PC-3 (cell line): ENCODE measurements at regions of chrX and their contacts with region 1.

Region 1: DNA sequence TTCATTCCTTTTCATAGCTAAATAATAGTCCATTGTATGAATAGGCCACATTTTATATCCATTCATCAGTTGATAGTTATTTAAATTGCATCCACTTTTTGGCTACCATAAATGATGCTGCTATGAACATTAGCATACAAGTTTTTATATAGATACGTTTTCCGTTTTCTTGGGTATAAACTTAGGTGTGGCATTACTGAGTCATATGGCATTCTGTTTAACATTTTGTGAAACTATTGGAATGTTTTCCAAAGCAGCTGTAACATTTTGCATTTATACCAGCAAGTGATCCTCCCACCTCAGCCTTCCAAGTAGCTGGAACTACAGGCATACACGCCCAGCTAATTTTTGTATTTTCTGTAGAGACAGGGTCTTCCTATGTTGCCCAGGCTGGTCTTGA is 26.3 kb downstream of the CLDN2 start:
- DNase-seq: peak; percentile 61
- ATAC-seq: peak; percentile 71
- H3K4me3 ChIP-seq: no peak overlapping the region
- H3K27ac ChIP-seq: no peak overlapping the region
- H3K4me1 ChIP-seq: peaks cover 42% of the 10 kb centered on the region
- H3K27me3 ChIP-seq: no peaks in the 10 kb centered on the region
- CTCF ChIP-seq: no peak

Region 2: DNA sequence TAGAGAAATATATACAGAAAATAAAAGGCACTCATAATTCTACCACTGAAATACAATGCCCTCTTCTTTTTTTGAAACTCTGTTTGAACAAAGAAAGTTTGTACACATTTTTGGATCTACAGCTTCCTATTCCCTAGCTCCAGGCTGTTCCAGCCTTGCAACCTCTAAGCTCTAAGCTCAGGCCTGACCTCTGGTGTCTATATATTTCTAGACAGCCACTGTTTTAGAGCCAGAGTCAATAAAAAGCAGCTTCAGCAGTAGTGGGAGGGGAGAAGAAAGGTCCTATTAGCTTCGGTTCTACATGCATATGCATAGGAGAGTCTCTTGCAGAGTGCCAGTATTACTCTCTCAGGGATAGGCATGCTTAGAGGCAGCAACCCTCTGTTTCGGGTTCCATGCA is 13.4 kb after region 1 on chrX:
- CTCF ChIA-PET with region 1: interaction called, 12 read pairs
- POLR2A ChIA-PET with region 1: no interaction called
- intact Hi-C with region 1: no loop called
- DNase-seq: peak; percentile 64
- ATAC-seq: peak; percentile 82
- H3K4me3 ChIP-seq: no peak overlapping the region
- H3K27ac ChIP-seq: no peak overlapping the region
- H3K4me1 ChIP-seq: peaks cover 16% of the 10 kb centered on the region
- H3K27me3 ChIP-seq: no peaks in the 10 kb centered on the region
- CTCF ChIP-seq: peak; percentile 64